Activated B cell treated with CpG ODN at 0.5 μM for 24 hours (primary cell): ENCODE measurements at regions of chr19 and their contacts with region 1.

Region 1: DNA sequence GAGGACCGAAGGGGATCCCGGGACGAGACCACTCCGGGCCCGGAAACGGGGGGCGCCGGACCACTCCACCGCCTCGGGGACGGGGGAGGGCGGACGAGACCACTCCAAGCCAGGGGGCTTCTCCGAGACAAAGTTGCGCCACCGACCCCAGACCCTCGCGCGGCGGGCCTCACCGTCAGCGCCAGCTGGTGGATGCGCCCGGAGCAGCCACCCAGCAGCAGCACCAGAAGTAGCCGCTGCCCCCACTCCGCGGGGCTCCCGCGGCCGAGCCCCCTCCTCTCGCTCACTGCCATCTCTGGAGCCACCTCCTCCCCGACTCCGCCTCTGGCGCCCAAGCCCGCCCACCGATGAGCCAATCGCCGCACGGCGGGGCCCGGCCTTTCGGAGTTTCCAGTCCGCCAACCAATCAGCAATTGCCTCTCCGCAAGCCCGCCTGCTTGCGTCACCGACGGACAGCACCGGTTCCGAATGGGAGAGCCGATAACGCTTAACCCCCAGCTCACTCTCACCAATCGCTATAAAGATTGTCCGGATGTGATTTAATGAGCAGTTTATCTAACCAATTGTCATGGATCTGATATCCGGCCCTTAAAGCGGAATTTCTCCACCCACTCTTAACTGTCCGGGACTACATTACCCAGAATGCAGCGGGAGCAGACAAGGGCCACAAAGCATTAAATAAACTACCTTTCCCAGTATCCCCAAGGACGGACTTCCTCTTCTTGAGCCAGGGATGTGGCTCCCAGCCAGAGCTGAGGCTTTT is at the start of gene GPR108:
- DNase-seq: peak; percentile 98
- ATAC-seq: peak; percentile 74
- H3K4me3 Mint-ChIP-seq: peak within 1 kb of the TSS; percentile 96
- H3K27ac Mint-ChIP-seq: peak within 1 kb of the TSS; percentile 96
- H3K4me1 Mint-ChIP-seq: peaks cover 44% of the 10 kb centered on the region
- H3K27me3 Mint-ChIP-seq: no peaks in the 10 kb centered on the region
- CTCF ChIP-seq: no peak
- total RNA-seq, gene GPR108: 53.5 and 55.6 TPM in 2 replicates

Region 2: DNA sequence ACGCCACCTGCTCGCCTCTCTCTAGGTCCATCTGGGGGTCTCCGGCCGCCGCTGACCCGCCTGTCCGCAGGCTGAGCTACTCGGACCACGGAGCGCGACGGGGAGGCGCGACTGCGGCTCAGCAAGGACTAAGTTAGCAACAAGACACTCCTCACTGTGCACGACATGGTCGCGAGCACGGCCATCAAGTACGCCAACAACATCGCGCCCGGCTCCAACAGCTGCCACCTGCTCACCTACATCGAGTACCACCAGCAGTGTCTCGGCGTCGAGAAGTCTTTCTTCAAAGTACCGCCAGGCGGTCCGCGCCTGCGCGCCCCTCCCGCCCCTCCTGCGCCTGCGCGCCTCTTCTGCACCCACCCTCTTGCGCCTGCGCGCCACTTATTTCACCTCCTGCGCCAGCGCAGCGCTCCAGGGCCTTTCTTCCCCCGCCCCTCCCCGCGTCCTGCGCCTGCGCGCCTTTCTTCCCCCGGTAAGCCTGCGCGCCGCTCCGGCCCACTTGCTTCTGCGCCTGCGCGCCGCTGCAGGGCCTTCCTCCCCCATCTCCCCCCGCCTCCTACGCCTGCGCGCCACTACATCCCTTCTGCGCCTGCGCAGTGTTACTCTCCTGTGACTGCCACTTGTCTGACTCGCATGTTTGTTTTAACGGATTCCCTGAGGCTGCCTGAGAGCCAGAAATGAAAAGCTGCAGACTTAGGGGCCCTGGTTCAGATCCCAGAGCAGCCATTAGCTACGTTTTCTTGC is 538.1 kb before region 1 on chr19:
- CTCF ChIA-PET with region 1: no interaction called
- POLR2A ChIA-PET with region 1: no interaction called
- intact Hi-C with region 1: loop called (anchors 1 kb)
- DNase-seq: peak; percentile 99
- ATAC-seq: peak; percentile 86
- H3K4me3 Mint-ChIP-seq: peak overlapping the region; percentile 95
- H3K27ac Mint-ChIP-seq: peak overlapping the region; percentile 85
- H3K4me1 Mint-ChIP-seq: peaks cover 33% of the 10 kb centered on the region
- H3K27me3 Mint-ChIP-seq: no peaks in the 10 kb centered on the region
- CTCF ChIP-seq: no peak

Region 3: GRCh38 chr19:6372594-6373095 is 364.8 kb before region 1 on chr19 and contains the start of gene ALKBH7:
- CTCF ChIA-PET with region 1: no interaction called
- POLR2A ChIA-PET with region 1: interaction called, 6 read pairs
- intact Hi-C with region 1: loop called (anchors 1 kb)
- DNase-seq: peak; percentile 84
- ATAC-seq: peak; percentile 74
- H3K4me3 Mint-ChIP-seq: peak within 1 kb of the TSS; percentile 92
- H3K27ac Mint-ChIP-seq: peak within 1 kb of the TSS; percentile 93
- H3K4me1 Mint-ChIP-seq: peaks cover 15% of the 10 kb centered on the region
- H3K27me3 Mint-ChIP-seq: no peaks in the 10 kb centered on the region
- CTCF ChIP-seq: no peak
- total RNA-seq, gene ALKBH7: 48.4 and 52.9 TPM in 2 replicates

Region 4: DNA sequence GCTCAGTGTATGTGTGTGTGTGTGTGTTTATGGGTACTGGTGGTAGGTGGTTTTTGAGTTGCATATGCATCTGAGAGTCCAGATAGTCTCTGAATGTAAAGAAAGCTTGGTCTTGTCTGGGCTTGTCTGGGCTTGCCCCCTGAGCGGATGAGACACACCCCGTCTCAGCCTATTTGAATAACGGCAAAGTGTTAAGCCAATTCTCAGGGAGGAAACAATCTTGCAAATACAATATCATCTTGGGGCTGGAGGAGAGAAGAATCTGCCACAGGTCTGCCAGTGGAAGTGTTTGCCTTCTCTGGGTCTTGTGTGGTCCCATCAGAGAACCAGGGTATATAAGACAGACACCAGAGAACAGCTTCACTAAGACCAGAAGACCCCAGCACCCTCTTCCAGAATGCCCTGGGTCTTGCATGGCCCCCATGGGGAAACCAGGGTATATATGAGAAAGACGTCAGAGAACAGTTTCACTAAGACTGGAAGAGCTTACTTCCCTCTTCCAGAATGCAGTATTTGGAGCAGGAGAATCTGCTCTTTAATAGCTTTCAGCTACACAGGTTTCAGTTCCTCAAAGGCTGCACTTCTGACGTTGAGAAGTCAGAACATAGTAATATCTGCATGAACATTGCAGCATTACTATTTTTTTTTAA is 159.9 kb before region 1 on chr19:
- CTCF ChIA-PET with region 1: interaction called, 3 read pairs
- POLR2A ChIA-PET with region 1: interaction called, 4 read pairs
- intact Hi-C with region 1: loop called (anchors 1 kb)
- DNase-seq: peak; percentile 54
- ATAC-seq: peak; percentile 90
- H3K4me3 Mint-ChIP-seq: peak overlapping the region; percentile 68
- H3K27ac Mint-ChIP-seq: no peak overlapping the region
- H3K4me1 Mint-ChIP-seq: peaks cover 6% of the 10 kb centered on the region
- H3K27me3 Mint-ChIP-seq: no peaks in the 10 kb centered on the region
- CTCF ChIP-seq: no peak

Region 5: DNA sequence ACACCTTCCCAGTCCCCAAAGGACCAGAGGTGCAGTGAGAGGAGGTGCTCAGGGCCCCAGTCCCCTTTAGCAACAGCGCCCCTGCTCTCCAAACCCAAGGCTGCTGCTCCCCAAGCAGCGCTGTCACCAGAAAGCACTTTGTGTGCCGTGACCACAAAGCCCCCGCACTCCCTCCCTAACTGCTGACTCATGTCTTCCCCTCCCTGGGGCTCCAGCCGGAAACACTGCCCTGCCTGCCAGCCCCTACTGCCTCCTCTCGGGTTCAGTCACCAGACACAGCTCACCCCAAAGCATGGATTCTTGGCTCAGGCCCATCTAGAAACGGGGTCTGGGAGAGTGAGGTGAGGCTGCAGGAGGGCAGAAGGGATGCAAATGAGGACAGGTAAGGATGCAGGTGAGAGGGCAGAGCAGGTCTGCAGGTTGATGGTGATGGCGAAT is 62.6 kb before region 1 on chr19:
- CTCF ChIA-PET with region 1: no interaction called
- POLR2A ChIA-PET with region 1: no interaction called
- intact Hi-C with region 1: loop called (anchors 2 kb)
- DNase-seq: peak; percentile 50
- ATAC-seq: peak; percentile 69
- H3K4me3 Mint-ChIP-seq: no peak overlapping the region
- H3K27ac Mint-ChIP-seq: peak overlapping the region; percentile 7
- H3K4me1 Mint-ChIP-seq: peaks cover 30% of the 10 kb centered on the region
- H3K27me3 Mint-ChIP-seq: peaks cover 20% of the 10 kb centered on the region
- CTCF ChIP-seq: no peak

Region 6: DNA sequence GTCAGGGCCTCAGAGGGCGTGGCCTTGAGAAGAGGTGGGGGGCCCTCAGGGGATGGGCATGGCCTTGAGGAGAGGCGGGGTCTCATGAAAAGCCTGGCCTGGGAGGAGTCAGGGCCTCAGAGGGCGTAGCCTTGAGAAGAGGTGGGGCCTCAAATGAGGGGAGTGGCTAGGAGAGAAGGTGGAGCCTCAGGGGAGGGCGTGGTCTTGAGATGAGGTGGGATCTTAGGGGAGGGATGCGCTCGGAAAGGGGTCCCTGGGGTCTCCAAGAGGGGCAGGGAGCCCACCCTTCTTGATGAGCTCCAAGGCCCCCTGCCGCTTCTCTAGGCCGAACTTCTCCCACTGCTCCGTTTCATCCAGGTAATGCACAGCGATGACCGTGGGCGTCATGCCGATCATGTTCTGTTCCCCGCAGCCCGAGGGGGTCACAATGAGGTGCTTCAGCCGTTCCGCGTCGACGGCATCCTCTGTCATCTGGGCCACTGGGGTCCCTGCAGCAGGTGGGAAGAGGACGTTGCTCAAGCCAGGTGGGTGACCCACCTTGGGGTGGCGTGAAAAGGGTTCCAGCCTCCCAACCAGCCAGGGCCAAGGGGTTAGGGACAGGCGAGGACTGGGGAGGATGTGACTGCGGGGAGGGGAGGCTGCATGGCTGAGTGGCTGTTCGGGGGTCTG is 43.2 kb before region 1 on chr19:
- CTCF ChIA-PET with region 1: no interaction called
- POLR2A ChIA-PET with region 1: no interaction called
- intact Hi-C with region 1: no loop called
- DNase-seq: no peak
- ATAC-seq: peak; percentile 7
- H3K4me3 Mint-ChIP-seq: no peak overlapping the region
- H3K27ac Mint-ChIP-seq: no peak overlapping the region
- H3K4me1 Mint-ChIP-seq: no peaks in the 10 kb centered on the region
- H3K27me3 Mint-ChIP-seq: peaks cover 6% of the 10 kb centered on the region
- CTCF ChIP-seq: no peak

Region 7: GRCh38 chr19:6767357-6768235 is 30.1 kb after region 1 on chr19 and contains the start of gene SH2D3A:
- CTCF ChIA-PET with region 1: interaction called, 13 read pairs
- POLR2A ChIA-PET with region 1: interaction called, 48 read pairs
- intact Hi-C with region 1: loop called (anchors 1 kb)
- DNase-seq: peak; percentile 87
- ATAC-seq: peak; percentile 73
- H3K4me3 Mint-ChIP-seq: peak within 1 kb of the TSS; percentile 88
- H3K27ac Mint-ChIP-seq: peak within 1 kb of the TSS; percentile 85
- H3K4me1 Mint-ChIP-seq: peaks cover 46% of the 10 kb centered on the region
- H3K27me3 Mint-ChIP-seq: no peaks in the 10 kb centered on the region
- CTCF ChIP-seq: no peak
- total RNA-seq, gene SH2D3A: 18.7 and 22.6 TPM in 2 replicates

Region 8: DNA sequence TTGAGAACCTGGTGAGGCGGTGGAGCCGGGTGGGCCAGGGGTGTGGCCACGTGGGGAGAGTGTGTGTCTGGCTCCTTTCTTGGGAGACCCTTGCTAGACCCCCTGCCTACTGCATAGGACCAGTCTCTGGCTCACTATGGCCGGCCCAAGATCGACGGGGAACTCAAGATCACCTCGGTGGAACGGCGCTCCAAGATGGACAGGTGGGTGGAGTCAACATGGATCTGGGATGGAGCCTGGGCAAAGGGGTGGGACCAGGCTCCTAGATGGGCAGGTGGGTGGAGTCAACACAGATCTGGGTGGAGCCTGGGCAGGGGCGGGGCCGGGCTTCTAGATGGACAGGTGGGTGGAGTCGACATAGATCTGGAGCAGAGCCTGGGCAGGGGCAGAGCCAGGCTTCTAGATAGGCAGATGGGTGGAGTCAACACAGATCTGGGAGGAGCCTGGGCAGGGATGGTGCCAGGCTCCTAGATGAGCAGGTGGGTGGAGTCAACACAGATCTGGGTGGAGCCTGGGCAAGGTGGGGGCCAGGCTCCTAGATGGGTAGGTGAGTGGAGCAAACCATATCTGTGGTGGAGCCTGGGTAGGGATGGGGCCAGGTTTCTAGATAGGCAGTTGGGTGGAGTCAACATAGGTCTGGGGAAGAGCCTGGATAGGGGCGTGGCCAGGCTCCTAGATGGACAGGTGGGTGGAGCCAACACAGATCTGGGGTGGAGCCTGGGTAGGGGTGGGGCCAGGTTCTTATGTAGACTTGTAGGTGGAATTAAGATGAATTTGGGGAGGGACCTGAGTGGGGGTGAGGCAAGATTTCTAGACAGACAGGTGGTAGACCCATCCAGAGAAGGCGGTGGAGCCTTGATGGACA is 91.5 kb after region 1 on chr19:
- CTCF ChIA-PET with region 1: no interaction called
- POLR2A ChIA-PET with region 1: no interaction called
- intact Hi-C with region 1: no loop called
- DNase-seq: no peak
- ATAC-seq: peak; percentile 80
- H3K4me3 Mint-ChIP-seq: no peak overlapping the region
- H3K27ac Mint-ChIP-seq: peak overlapping the region; percentile 35
- H3K4me1 Mint-ChIP-seq: peaks cover 6% of the 10 kb centered on the region
- H3K27me3 Mint-ChIP-seq: no peaks in the 10 kb centered on the region
- CTCF ChIP-seq: no peak